Gastrocnemius medialis (tissue), 4 donors: ENCODE measurements at regions of chr14 and their contacts with region 1.

Region 1: GRCh38 chr14:24241829-24242443 is 487 bp downstream of the TINF2 start:
- DNase-seq: peak in 1 of 2 donors; percentile 86
- ATAC-seq: peak; percentile 86 to 87
- H3K4me3 ChIP-seq: peak overlapping the region; percentile 71 to 85 (median 82)
- H3K27ac ChIP-seq: peak overlapping the region; percentile 91 to 95 (median 94)
- H3K4me1 ChIP-seq: peaks cover 34 to 42% of the 10 kb centered on the region in 2 donors
- H3K27me3 ChIP-seq: no peaks in the 10 kb centered on the region
- CTCF ChIP-seq: peak; percentile 71 to 85 (median 84)
- POLR2A ChIP-seq: no peak

Region 2: GRCh38 chr14:24171422-24172260 is 70.3 kb before region 1 on chr14 and contains the start of gene REC8:
- in situ Hi-C with region 1: no loop called
- intact Hi-C with region 1: no loop called
- DNase-seq: peak in 1 of 2 donors; percentile 32
- ATAC-seq: peak in 1 of 2 donors; percentile 44
- H3K4me3 ChIP-seq: peak within 1 kb of the TSS in 1 of 4 donors; percentile 21
- H3K27ac ChIP-seq: no peak within 1 kb of the TSS
- H3K4me1 ChIP-seq: peaks cover 4 to 5% of the 10 kb centered on the region in 2 donors
- H3K27me3 ChIP-seq: peaks cover 9 to 21% (median 15%) of the 10 kb centered on the region in 3 donors
- CTCF ChIP-seq: no peak
- POLR2A ChIP-seq: no peak
- total RNA-seq, gene REC8: 0.27 to 3.1 (median 0.82) TPM in 3 of 4 donors, not detected in the other

Region 3: GRCh38 chr14:24195191-24196070 is 46.5 kb before region 1 on chr14 and contains the start of gene TM9SF1:
- in situ Hi-C with region 1: no loop called
- intact Hi-C with region 1: loop called (anchors 2 kb)
- DNase-seq: peak; percentile 65 to 82
- ATAC-seq: peak; percentile 95 to 97
- H3K4me3 ChIP-seq: peak within 1 kb of the TSS; percentile 84 to 100 (median 93)
- H3K27ac ChIP-seq: peak within 1 kb of the TSS; percentile 93 to 96 (median 95)
- H3K4me1 ChIP-seq: peaks cover 21% of the 10 kb centered on the region in 2 donors
- H3K27me3 ChIP-seq: no peaks in the 10 kb centered on the region
- CTCF ChIP-seq: peak in 1 of 5 experiments; percentile 24
- POLR2A ChIP-seq: peak; percentile 55 to 73
- total RNA-seq, gene TM9SF1: 31.4 to 46.4 (median 36.7) TPM

Region 4: GRCh38 chr14:24215495-24216344 is 26.2 kb before region 1 on chr14 and contains the start of gene MDP1:
- in situ Hi-C with region 1: no loop called
- intact Hi-C with region 1: loop called (anchors 1 kb)
- DNase-seq: peak; percentile 64 to 82
- ATAC-seq: peak; percentile 78 to 81
- H3K4me3 ChIP-seq: peak within 1 kb of the TSS; percentile 70 to 87 (median 76)
- H3K27ac ChIP-seq: peak within 1 kb of the TSS; percentile 83 to 94 (median 91)
- H3K4me1 ChIP-seq: peaks cover 28 to 29% of the 10 kb centered on the region in 2 donors
- H3K27me3 ChIP-seq: no peaks in the 10 kb centered on the region
- CTCF ChIP-seq: peak in 3 of 5 experiments; percentile 30 to 60 (median 45)
- POLR2A ChIP-seq: peak; percentile 68 to 84
- total RNA-seq, gene MDP1: 6.7 to 19.2 (median 13.9) TPM

Region 5: GRCh38 chr14:24271134-24271833 is 29.3 kb after region 1 on chr14 and contains the start of gene RABGGTA:
- in situ Hi-C with region 1: no loop called
- intact Hi-C with region 1: loop called (anchors 1 kb)
- DNase-seq: peak; percentile 65 to 81
- ATAC-seq: peak; percentile 95 to 97
- H3K4me3 ChIP-seq: peak within 1 kb of the TSS; percentile 78 to 98 (median 94)
- H3K27ac ChIP-seq: peak within 1 kb of the TSS; percentile 87 to 99 (median 98)
- H3K4me1 ChIP-seq: peaks cover 4 to 6% of the 10 kb centered on the region in 2 donors
- H3K27me3 ChIP-seq: no peaks in the 10 kb centered on the region
- CTCF ChIP-seq: peak; percentile 42 to 82 (median 70)
- POLR2A ChIP-seq: peak; percentile 35 to 48
- total RNA-seq, gene RABGGTA: 20.9 to 32.8 (median 28.0) TPM

Region 6: DNA sequence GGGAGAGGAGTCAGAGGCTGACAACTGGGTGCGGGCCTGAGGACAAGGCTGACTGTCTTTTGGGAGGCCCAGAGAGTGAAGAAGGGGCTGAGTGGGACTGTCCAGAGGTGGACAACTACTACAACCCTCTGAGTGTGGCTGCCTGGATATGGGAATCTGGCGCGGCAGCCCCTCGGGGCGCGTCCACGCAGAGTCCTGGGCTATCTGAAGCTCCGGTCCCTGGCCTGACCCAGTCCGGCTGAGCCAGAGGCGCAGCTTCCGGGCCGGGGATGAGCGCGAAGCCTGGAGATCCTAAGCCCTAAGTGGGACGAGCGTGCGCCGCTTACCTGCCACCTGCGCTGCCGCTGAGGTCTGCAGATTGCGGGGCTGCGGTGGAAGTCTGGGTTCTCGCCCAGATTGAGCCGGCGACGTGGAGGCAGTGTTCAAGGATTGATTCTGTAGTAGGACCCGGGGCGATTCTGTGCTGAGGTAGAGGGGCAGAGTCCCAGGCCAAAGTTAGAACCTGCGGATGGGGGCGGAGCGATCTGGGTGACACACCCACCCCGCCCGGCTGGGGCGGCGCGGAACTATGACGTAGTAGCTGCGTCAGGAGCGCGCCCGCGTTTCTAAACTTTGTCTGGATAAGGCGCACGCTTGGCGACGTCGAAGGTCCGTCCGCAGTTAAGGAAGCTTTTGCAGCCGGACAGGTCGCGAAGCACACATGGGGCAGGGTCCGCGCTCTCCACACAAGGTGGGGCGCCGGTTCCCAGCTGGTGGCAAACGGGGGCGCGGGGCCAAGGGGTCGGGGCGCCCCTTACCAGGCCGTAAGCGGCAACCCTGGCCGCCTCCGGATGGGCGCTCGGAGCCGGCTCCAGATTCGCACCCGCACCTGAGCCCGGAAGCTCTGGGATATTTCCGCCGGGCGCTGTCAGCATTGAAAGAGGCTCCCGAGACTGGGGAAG is 57.6 kb after region 1 on chr14 and contains the starts of genes DHRS1 and NOP9:
- in situ Hi-C with region 1: loop called (anchors 5 to 10 kb)
- intact Hi-C with region 1: loop called (anchors 1 kb)
- DNase-seq: peak; percentile 68 to 85
- ATAC-seq: peak; percentile 90 to 95
- H3K4me3 ChIP-seq: peak within 1 kb of the TSS; percentile 82 to 97 (median 88)
- H3K27ac ChIP-seq: peak within 1 kb of the TSS; percentile 75 to 89 (median 88)
- H3K4me1 ChIP-seq: peaks cover 13 to 20% of the 10 kb centered on the region in 2 donors
- H3K27me3 ChIP-seq: no peaks in the 10 kb centered on the region
- CTCF ChIP-seq: peak in 1 of 5 experiments; percentile 3
- POLR2A ChIP-seq: peak; percentile 26 to 59
- total RNA-seq, gene DHRS1: 1.9 to 12.2 (median 8.2) TPM
- total RNA-seq, gene NOP9: 27.2 to 43.5 (median 32.2) TPM

Region 7: DNA sequence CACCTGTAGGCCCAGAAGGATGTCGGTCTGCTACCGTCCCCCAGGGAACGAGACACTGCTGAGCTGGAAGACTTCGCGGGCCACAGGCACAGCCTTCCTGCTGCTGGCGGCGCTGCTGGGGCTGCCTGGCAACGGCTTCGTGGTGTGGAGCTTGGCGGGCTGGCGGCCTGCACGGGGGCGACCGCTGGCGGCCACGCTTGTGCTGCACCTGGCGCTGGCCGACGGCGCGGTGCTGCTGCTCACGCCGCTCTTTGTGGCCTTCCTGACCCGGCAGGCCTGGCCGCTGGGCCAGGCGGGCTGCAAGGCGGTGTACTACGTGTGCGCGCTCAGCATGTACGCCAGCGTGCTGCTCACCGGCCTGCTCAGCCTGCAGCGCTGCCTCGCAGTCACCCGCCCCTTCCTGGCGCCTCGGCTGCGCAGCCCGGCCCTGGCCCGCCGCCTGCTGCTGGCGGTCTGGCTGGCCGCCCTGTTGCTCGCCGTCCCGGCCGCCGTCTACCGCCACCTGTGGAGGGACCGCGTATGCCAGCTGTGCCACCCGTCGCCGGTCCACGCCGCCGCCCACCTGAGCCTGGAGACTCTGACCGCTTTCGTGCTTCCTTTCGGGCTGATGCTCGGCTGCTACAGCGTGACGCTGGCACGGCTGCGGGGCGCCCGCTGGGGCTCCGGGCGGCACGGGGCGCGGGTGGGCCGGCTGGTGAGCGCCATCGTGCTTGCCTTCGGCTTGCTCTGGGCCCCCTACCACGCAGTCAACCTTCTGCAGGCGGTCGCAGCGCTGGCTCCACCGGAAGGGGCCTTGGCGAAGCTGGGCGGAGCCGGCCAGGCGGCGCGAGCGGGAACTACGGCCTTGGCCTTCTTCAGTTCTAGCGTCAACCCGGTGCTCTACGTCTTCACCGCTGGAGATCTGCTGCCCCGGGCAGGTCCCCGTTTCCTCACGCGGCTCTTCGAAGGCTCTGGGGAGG is 69.0 kb after region 1 on chr14 and contains the start of gene LTB4R:
- in situ Hi-C with region 1: loop called in 1 of 4 experiments (anchors 10 kb)
- intact Hi-C with region 1: loop called (anchors 2 kb)
- DNase-seq: peak; percentile 38 to 74
- ATAC-seq: peak; percentile 76 to 85
- H3K4me3 ChIP-seq: peak within 1 kb of the TSS; percentile 51 to 75 (median 55)
- H3K27ac ChIP-seq: peak within 1 kb of the TSS; percentile 71 to 81 (median 73)
- H3K4me1 ChIP-seq: peaks cover 12 to 19% of the 10 kb centered on the region in 2 donors
- H3K27me3 ChIP-seq: no peaks in the 10 kb centered on the region
- CTCF ChIP-seq: peak in 4 of 5 experiments; percentile 40 to 54 (median 46)
- POLR2A ChIP-seq: no peak
- total RNA-seq, gene LTB4R: 0.13 to 2.2 (median 0.75) TPM

Region 8: DNA sequence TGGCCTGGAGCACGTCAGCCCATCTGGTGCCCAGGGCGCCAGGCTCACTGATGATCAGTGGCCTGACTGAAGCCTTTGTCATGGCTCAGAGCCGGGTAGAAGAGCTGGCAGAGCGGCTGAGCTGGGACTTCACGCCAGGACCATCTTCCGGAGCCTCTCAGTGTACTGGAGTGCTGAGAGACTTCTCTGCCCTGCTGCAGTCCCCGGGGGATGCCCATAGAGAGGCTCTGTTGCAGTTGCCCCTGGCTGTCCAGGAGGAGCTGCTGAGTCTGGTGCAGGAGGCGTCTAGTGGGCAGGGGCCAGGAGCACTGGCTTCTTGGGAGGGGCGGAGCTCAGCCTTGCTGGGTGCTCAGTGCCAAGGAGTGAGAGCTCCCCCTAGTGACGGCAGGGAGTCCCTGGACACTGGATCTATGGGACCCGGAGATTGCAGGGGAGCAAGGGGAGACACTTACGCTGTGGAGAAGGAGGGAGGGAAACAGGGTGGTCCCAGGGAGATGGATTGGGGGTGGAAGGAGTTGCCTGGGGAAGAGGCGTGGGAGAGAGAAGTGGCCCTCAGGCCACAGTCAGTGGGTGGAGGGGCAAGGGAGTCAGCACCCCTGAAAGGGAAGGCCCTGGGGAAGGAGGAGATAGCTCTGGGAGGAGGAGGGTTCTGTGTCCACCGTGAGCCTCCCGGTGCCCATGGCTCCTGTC is 189.8 kb after region 1 on chr14:
- in situ Hi-C with region 1: loop called in 3 of 4 experiments (anchors 10 to 25 kb)
- intact Hi-C with region 1: loop called (anchors 2 kb)
- DNase-seq: peak; percentile 76 to 87
- ATAC-seq: peak; percentile 51 to 70
- H3K4me3 ChIP-seq: peak overlapping the region in 3 of 4 donors; percentile 62 to 81 (median 76)
- H3K27ac ChIP-seq: peak overlapping the region; percentile 85 to 90 (median 86)
- H3K4me1 ChIP-seq: peaks cover 19 to 22% of the 10 kb centered on the region in 2 donors
- H3K27me3 ChIP-seq: no peaks in the 10 kb centered on the region
- CTCF ChIP-seq: peak; percentile 79 to 92 (median 88)
- POLR2A ChIP-seq: no peak